ENCODE measurements at regions of chr13 and their contacts with region 1.

Region 1: GRCh38 chr13:97333983-97334382 is 100.0 kb upstream of the RAP2A start:
- DNase-seq: no peak
- H3K4me3 ChIP-seq: no peak overlapping the region
- CTCF ChIP-seq: no peak
- POLR2A ChIP-seq: no peak

Region 2: GRCh38 chr13:97160421-97160820 is 173.6 kb before region 1 on chr13:
- intact Hi-C with region 1: no loop called
- DNase-seq: no peak
- H3K4me3 ChIP-seq: no peak overlapping the region
- CTCF ChIP-seq: no peak
- POLR2A ChIP-seq: no peak

Region 3: GRCh38 chr13:97254809-97255208 is 79.2 kb before region 1 on chr13:
- intact Hi-C with region 1: loop called (anchors 5 kb)
- DNase-seq: no peak
- H3K4me3 ChIP-seq: no peak overlapping the region
- CTCF ChIP-seq: no peak
- POLR2A ChIP-seq: no peak

Region 4: DNA sequence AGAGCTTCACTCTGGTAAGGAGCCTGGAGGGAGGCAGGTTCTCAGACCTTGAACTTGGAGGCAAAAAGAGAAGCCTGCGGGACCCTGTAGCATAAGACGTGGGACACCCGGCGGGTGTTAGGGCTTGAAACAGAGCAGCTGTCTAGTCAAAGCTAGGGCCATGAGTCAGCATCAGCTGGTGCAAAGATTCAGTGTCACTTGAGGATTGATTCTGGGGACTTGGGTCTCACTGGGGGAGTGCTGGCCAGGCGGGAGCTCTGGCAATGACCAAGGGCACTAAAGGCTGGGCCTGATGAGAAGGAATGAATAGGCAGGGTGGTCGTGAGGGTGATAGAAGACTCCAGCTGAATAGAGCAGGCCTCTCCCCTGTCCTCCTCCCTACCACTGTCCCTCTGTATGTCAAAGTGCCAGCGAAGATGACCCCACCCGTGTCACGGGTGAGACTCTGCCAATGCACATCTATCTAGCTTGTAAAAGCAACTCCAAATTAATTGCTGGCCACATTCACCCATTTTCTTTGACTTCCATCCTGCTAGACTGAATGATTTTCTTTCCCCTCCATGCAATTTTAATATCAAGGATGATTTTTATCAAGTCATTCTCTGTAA is 14.8 kb before region 1 on chr13:
- intact Hi-C with region 1: no loop called
- DNase-seq: no peak
- H3K4me3 ChIP-seq: no peak overlapping the region
- CTCF ChIP-seq: no peak
- POLR2A ChIP-seq: no peak